CD14-positive monocyte (primary cell): ENCODE measurements at regions of chr1 and their contacts with region 1.

Region 1: DNA sequence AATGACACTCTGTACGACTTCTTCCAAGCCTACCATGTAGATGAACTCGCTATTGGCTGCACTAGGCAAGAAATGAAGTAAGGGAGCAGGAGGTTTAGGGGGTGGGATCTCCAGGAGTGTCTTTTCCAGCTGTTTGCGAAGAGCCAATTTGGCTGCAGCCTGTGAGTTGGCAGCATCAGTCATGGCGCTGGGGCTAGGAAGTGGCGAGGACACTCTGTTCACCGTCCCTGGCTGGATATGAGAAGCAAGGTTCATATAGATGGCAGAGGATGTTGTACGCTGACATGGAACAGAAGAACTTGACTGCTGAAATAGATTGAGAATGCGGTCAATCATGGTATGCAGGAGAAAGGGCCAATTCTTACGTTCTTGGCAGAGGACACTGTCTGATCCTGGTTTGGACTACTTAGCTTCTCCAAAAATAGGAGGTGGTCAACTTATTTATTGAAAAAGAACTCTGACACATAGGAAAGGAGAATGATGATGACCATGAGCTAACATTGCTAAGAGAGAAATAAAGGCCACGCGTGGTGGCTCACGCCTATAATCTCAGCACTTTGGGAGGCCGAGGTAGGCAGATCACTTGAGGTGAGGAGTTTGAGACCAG is 41.2 kb downstream of the SLC27A3 start:
- DNase-seq: no peak
- H3K4me3 ChIP-seq: no peak overlapping the region
- H3K4me3 Mint-ChIP-seq: no peak overlapping the region
- H3K27ac ChIP-seq: no peak overlapping the region
- H3K27ac Mint-ChIP-seq: peak overlapping the region in 1 of 7 donors; percentile 42
- H3K4me1 ChIP-seq: no peaks in the 10 kb centered on the region
- H3K4me1 Mint-ChIP-seq: peaks cover 2% of the 10 kb centered on the region
- H3K27me3 ChIP-seq: no peaks in the 10 kb centered on the region
- H3K27me3 Mint-ChIP-seq: peaks cover 0 to 4% (median 2%) of the 10 kb centered on the region in 3 donors
- CTCF ChIP-seq: no peak

Region 2: DNA sequence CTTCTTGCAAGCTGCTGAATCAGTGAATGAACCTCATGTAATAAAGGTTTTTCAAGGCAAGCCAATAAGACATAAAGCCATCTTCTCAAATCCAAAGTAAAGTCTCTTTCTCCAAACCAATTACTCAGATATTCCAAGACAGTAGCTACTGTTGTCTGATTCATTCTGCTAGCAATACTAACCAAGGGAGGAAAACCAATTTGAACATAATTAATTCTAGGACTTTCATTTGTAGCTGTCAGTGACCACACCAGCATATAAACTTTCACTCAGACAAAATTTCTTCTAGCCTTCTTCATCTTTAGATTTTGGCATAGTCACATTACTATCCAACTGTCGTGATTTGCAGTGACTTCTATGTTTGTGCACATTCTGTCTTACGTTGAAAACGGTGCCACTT is 99.1 kb before region 1 on chr1:
- intact Hi-C with region 1: no loop called
- DNase-seq: no peak
- H3K4me3 ChIP-seq: no peak overlapping the region
- H3K4me3 Mint-ChIP-seq: no peak overlapping the region
- H3K27ac ChIP-seq: no peak overlapping the region
- H3K27ac Mint-ChIP-seq: no peak overlapping the region
- H3K4me1 ChIP-seq: no peaks in the 10 kb centered on the region
- H3K4me1 Mint-ChIP-seq: no peaks in the 10 kb centered on the region
- H3K27me3 ChIP-seq: no peaks in the 10 kb centered on the region
- H3K27me3 Mint-ChIP-seq: peaks cover 0 to 9% (median 2%) of the 10 kb centered on the region in 3 donors
- CTCF ChIP-seq: no peak

Region 3: GRCh38 chr1:153872934-153873333 is 56.5 kb after region 1 on chr1:
- intact Hi-C with region 1: loop called in 1 of 2 experiments (anchors 10 kb)
- DNase-seq: no peak
- H3K4me3 ChIP-seq: no peak overlapping the region
- H3K4me3 Mint-ChIP-seq: no peak overlapping the region
- H3K27ac ChIP-seq: peak overlapping the region in 1 of 2 donors; percentile 49
- H3K27ac Mint-ChIP-seq: peak overlapping the region in 4 of 7 donors; percentile 18 to 72 (median 53)
- H3K4me1 ChIP-seq: peaks cover 16 to 17% of the 10 kb centered on the region in 2 donors
- H3K4me1 Mint-ChIP-seq: peaks cover 19% of the 10 kb centered on the region
- H3K27me3 ChIP-seq: no peaks in the 10 kb centered on the region
- H3K27me3 Mint-ChIP-seq: no peaks in the 10 kb centered on the region
- CTCF ChIP-seq: no peak

Region 4: DNA sequence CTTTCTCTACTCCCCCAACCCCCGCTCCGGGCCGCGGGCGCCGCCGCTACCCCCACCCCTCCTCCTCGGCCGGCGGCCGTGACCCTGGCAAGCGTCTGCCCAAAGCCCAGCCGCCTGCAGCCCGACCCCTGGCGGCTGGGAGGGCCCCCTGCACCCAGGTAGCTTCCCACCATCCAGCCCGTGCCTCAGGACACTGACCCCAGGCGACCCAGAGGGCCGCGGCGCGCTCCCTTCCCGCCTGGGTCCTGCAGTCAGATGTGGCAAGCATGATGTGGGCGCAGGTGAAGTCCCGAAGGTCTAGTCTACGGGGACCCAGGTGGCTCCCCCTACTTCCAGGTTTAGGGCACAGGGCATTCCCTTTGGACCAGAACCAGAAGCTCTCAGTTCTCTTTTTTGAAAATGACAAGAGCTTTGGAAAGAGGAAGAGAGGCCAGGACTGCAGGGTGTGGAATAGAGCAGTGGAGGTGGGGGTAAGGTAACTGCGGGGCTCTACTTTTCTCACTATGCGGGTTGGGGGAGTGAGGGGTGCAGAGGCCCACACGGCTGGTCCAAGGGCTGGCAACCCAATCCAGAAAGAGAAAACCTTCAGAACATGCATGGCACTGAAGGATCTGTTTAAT is 130.3 kb after region 1 on chr1 and contains the start of gene DENND4B:
- intact Hi-C with region 1: no loop called
- DNase-seq: peak; percentile 79 to 86 (median 85)
- H3K4me3 ChIP-seq: peak within 1 kb of the TSS; percentile 70 to 83 (median 83)
- H3K4me3 Mint-ChIP-seq: peak within 1 kb of the TSS; percentile 83 to 93
- H3K27ac ChIP-seq: peak within 1 kb of the TSS; percentile 100
- H3K27ac Mint-ChIP-seq: peak within 1 kb of the TSS; percentile 98 to 100 (median 100)
- H3K4me1 ChIP-seq: peaks cover 54 to 57% of the 10 kb centered on the region in 2 donors
- H3K4me1 Mint-ChIP-seq: peaks cover 55% of the 10 kb centered on the region
- H3K27me3 ChIP-seq: no peaks in the 10 kb centered on the region
- H3K27me3 Mint-ChIP-seq: peaks cover 0 to 2% (median 0%) of the 10 kb centered on the region in 3 donors
- CTCF ChIP-seq: peak; percentile 94
- polyA plus RNA-seq, gene DENND4B: 7.8 to 324 (median 10.9) TPM